ENCODE measurements at regions of chr5 and their contacts with region 1.

Region 1: GRCh38 chr5:141835928-141836670 is 42.1 kb downstream of the PCDH1 start:
- DNase-seq: no peak
- H3K4me3 ChIP-seq: no peak overlapping the region
- H3K27ac ChIP-seq: 0 out of 2 replicates have a peak overlapping the region, but pooled peaks have one; percentile 14
- H3K4me1 ChIP-seq: peaks cover 31 to 46% (median 43%) of the 10 kb centered on the region in 4 experiments
- H3K27me3 ChIP-seq: no peaks in the 10 kb centered on the region
- CTCF ChIP-seq: no peak
- EP300 ChIP-seq: no peak
- POLR2A ChIP-seq: no peak
- RAD21 ChIP-seq: no peak

Region 2: GRCh38 chr5:141855265-141856036 is 19.4 kb after region 1 on chr5:
- CTCF ChIA-PET with region 1: interaction called, 10 read pairs
- POLR2A ChIA-PET with region 1: interaction called, 26 read pairs
- DNase-seq: no peak
- H3K4me3 ChIP-seq: no peak overlapping the region
- H3K27ac ChIP-seq: 0 out of 2 replicates have a peak overlapping the region, but pooled peaks have one; percentile 10
- H3K4me1 ChIP-seq: peaks cover 20 to 48% (median 37%) of the 10 kb centered on the region in 4 experiments
- H3K27me3 ChIP-seq: no peaks in the 10 kb centered on the region
- CTCF ChIP-seq: no peak
- EP300 ChIP-seq: no peak
- POLR2A ChIP-seq: no peak
- RAD21 ChIP-seq: no peak

Region 3: GRCh38 chr5:141898448-141899049 is 62.5 kb after region 1 on chr5:
- CTCF ChIA-PET with region 1: no interaction called
- POLR2A ChIA-PET with region 1: no interaction called
- DNase-seq: no peak
- H3K4me3 ChIP-seq: no peak overlapping the region
- H3K27ac ChIP-seq: no peak overlapping the region
- H3K4me1 ChIP-seq: no peaks in the 10 kb centered on the region
- H3K27me3 ChIP-seq: no peaks in the 10 kb centered on the region
- CTCF ChIP-seq: no peak
- EP300 ChIP-seq: no peak
- POLR2A ChIP-seq: no peak
- RAD21 ChIP-seq: no peak